CD8-positive, alpha-beta T cell (primary cell): ENCODE measurements at regions of chrX and their contacts with region 1.

Region 1: DNA sequence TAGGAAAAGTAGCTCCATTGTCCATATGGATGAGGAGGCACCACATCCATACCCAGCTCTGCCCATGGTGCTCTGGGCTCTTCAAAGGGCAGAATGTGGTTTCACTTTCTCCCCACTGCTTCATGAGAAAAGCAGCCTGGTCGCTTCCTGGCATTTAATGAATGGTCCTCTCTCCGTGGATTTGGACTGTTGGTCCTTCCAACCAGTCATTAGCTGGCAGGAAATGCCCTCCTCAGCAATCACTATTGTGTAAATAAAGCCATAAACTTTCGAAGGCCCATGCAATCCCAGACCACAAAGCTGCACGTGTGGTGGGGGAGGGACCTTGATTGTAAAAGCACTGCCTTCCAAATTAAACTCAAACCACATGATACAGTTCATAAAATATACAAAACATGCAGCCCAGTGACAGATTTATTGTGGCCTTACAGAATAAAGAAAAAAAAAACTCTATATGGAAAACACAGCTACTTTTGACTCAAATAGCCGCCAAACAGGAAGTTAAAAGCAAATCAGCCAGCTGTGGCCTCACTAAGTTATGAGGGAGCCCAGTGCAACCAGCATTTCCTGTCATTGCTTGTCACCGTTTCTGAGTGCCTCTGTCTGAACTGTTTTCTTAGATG is 8.1 kb downstream of the MBNL3 start:
- DNase-seq: peak in 8 of 9 experiments; percentile 21 to 75 (median 46)
- ATAC-seq: peak; percentile 90
- H3K4me3 ChIP-seq: peak overlapping the region; percentile 51 to 52
- H3K4me3 Mint-ChIP-seq: peak overlapping the region; percentile 84
- H3K27ac ChIP-seq: peak overlapping the region; percentile 65 to 84
- H3K27ac Mint-ChIP-seq: peak overlapping the region; percentile 93
- H3K4me1 ChIP-seq: peaks cover 30% of the 10 kb centered on the region
- H3K4me1 Mint-ChIP-seq: peaks cover 58% of the 10 kb centered on the region
- H3K27me3 ChIP-seq: no peaks in the 10 kb centered on the region
- H3K27me3 Mint-ChIP-seq: no peaks in the 10 kb centered on the region
- CTCF ChIP-seq: no peak

Region 2: GRCh38 chrX:132508834-132509233 is 28.1 kb after region 1 on chrX:
- CTCF ChIA-PET with region 1: no interaction called
- POLR2A ChIA-PET with region 1: no interaction called
- intact Hi-C with region 1: loop called in 1 of 2 experiments (anchors 1 kb)
- DNase-seq: no peak
- ATAC-seq: no peak
- H3K4me3 ChIP-seq: no peak overlapping the region
- H3K4me3 Mint-ChIP-seq: no peak overlapping the region
- H3K27ac ChIP-seq: no peak overlapping the region
- H3K27ac Mint-ChIP-seq: no peak overlapping the region
- H3K4me1 ChIP-seq: no peaks in the 10 kb centered on the region
- H3K4me1 Mint-ChIP-seq: no peaks in the 10 kb centered on the region
- H3K27me3 ChIP-seq: no peaks in the 10 kb centered on the region
- H3K27me3 Mint-ChIP-seq: no peaks in the 10 kb centered on the region
- CTCF ChIP-seq: no peak